Endothelial cell of umbilical vein (primary cell): ENCODE measurements at regions of chr9 and their contacts with region 1.

Region 1: DNA sequence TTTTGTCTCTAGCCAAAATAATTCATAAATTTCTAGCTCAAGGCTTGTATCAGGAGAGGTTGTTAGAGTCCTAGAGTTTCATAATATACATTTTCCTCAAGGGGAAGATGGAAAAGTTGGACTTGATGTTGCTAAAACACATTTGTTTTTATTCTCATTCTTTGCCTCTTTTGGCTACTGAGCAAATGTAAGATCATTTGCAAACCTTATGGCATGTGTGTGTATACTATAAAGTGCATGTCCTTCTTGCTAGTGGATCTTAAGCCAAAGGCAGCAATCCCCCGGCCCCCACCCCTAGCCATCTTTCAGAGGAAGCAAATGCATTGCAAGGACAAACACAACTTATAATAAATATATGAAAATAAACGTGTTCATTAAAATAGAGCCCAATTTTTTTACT is 43.0 kb downstream of the ADAMTSL1 start:
- DNase-seq: no peak
- H3K4me3 ChIP-seq: no peak overlapping the region
- H3K27ac ChIP-seq: no peak overlapping the region
- H3K4me1 ChIP-seq: no peaks in the 10 kb centered on the region
- H3K27me3 ChIP-seq: no peaks in the 10 kb centered on the region
- CTCF ChIP-seq: no peak
- POLR2A ChIP-seq: no peak

Region 2: DNA sequence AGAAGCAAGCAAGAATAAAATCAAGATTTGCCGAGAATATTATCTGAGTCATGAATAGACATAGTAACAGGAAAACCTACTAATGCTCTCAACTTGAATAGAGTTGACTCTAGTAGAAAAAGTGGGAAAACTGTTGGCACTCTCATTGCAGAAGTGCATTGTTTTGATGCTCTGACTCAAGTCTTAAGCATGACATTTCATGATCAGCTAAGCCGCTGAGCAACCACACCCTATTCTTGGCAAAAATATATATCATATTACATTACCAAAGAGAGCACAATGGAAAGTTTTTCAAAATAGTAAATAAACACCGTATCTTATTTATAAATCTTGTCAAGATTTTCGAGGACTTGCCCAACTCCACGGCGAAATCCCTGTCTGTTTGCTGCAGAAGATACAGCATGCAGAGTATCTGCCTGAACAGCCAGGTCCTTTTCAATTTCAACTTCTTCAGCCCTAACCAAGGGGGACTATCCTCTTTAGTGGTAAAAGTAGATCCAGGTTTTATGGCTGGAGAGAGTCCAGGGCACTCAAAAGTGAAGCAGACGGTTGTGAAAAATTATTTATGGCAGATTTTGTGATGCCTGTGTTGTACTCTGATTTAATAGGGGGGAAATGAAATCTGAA is 56.9 kb before region 1 on chr9:
- CTCF ChIA-PET with region 1: no interaction called
- POLR2A ChIA-PET with region 1: no interaction called
- dilution Hi-C with region 1: no loop called
- intact Hi-C with region 1: loop called (anchors 5 kb)
- DNase-seq: peak; percentile 85
- H3K4me3 ChIP-seq: no peak overlapping the region
- H3K27ac ChIP-seq: peak overlapping the region; percentile 91
- H3K4me1 ChIP-seq: peaks cover 29% of the 10 kb centered on the region
- H3K27me3 ChIP-seq: no peaks in the 10 kb centered on the region
- CTCF ChIP-seq: no peak
- POLR2A ChIP-seq: peak; percentile 55